ENCODE measurements at regions of chr16 and their contacts with region 1.

Region 1: GRCh38 chr16:4330277-4330874 is 14.5 kb downstream of the GLIS2 start:
- DNase-seq: peak; percentile 83 to 94 (median 94)
- ATAC-seq: peak; percentile 62 to 68
- H3K4me3 ChIP-seq: no peak overlapping the region
- H3K27ac ChIP-seq: no peak overlapping the region
- H3K4me1 ChIP-seq: peaks cover 16% of the 10 kb centered on the region
- H3K27me3 ChIP-seq: no peaks in the 10 kb centered on the region

Region 2: GRCh38 chr16:4200000-4200780 is 130.2 kb before region 1 on chr16:
- intact Hi-C with region 1: loop called in 2 of 4 experiments (anchors 10 kb)
- DNase-seq: peak; percentile 63 to 84 (median 83)
- ATAC-seq: peak; percentile 78 to 79
- H3K4me3 ChIP-seq: no peak overlapping the region
- H3K27ac ChIP-seq: no peak overlapping the region
- H3K4me1 ChIP-seq: no peaks in the 10 kb centered on the region
- H3K27me3 ChIP-seq: no peaks in the 10 kb centered on the region

Region 3: GRCh38 chr16:4288148-4288921 is 42.0 kb before region 1 on chr16:
- intact Hi-C with region 1: loop called (anchors 2 to 10 kb)
- DNase-seq: peak; percentile 75 to 92 (median 92)
- ATAC-seq: peak; percentile 77 to 86
- H3K4me3 ChIP-seq: no peak overlapping the region
- H3K27ac ChIP-seq: no peak overlapping the region
- H3K4me1 ChIP-seq: peaks cover 2% of the 10 kb centered on the region
- H3K27me3 ChIP-seq: no peaks in the 10 kb centered on the region

Measured in right cardiac atrium (tissue), 5 donors.